ENCODE measurements at regions of chr6 and their contacts with region 1.

Region 1: DNA sequence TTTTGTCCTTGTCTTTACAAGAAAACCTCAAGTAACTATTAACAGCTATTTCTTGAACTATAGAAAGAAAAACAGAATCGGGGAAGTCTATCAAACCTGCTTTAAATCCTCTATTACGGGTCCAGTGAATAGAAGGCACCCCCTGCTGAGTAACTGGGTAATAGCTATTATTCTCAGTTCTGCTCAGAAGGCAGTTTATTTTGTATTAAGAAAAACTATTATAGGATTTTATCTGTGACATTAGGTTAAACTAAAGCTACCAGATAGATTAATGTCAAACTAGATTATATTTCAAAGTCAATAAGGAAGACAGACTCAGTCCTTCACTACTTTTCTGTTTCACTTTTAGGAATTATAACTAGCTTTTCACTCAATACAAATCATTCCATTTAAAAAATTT is 93.7 kb downstream of the DST start:
- DNase-seq: peak; percentile 27
- H3K4me3 ChIP-seq: no peak overlapping the region
- H3K27ac ChIP-seq: peak overlapping the region; percentile 33 to 55; a peak in 3 of 4 replicates
- H3K4me1 ChIP-seq: peaks cover 22 to 26% of the 10 kb centered on the region in 2 experiments; a peak in 3 of 4 replicates
- H3K27me3 ChIP-seq: no peaks in the 10 kb centered on the region
- CTCF ChIP-seq: peak; percentile 67
- EP300 ChIP-seq: peak in 1 of 2 experiments; percentile 30; a peak in 1 of 4 replicates
- RAD21 ChIP-seq: peak; percentile 77

Region 2: GRCh38 chr6:56364827-56365313 is 184.1 kb before region 1 on chr6:
- CTCF ChIA-PET with region 1: interaction called, 32 read pairs
- POLR2A ChIA-PET with region 1: no interaction called
- DNase-seq: no peak
- H3K4me3 ChIP-seq: no peak overlapping the region; a peak in 1 of 4 replicates
- H3K27ac ChIP-seq: peak overlapping the region; percentile 96
- H3K4me1 ChIP-seq: peaks cover 31 to 34% of the 10 kb centered on the region in 2 experiments
- H3K27me3 ChIP-seq: no peaks in the 10 kb centered on the region
- CTCF ChIP-seq: no peak
- EP300 ChIP-seq: peak; percentile 60 to 95; a peak in 3 of 4 replicates
- RAD21 ChIP-seq: no peak

Region 3: DNA sequence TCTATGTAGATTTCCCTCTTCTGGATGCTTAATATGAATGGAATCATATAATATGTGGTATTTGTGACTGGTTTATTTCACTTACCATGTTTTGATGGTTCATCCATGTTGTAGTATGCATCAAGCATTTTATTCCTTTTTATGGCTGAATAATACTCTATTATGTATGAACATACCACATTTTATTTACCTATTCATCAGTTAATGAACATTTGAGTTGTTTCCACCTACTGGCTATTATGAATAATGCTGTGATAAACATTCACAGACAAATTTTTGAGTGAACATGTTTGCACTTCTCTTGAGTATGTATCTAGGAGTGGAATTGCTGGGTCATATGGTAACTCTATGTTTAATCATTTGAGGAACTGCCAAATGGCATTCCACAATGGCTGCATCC is 526.1 kb after region 1 on chr6:
- CTCF ChIA-PET with region 1: no interaction called
- POLR2A ChIA-PET with region 1: no interaction called
- DNase-seq: no peak
- H3K4me3 ChIP-seq: no peak overlapping the region
- H3K27ac ChIP-seq: no peak overlapping the region
- H3K4me1 ChIP-seq: no peaks in the 10 kb centered on the region
- H3K27me3 ChIP-seq: no peaks in the 10 kb centered on the region
- CTCF ChIP-seq: no peak; the same call in 1 of the 2 replicates
- EP300 ChIP-seq: no peak
- RAD21 ChIP-seq: no peak

Measured in SK-N-SH (cell line).